CD8-positive, alpha-beta T cell (primary cell): ENCODE measurements at regions of chr7 and their contacts with region 1.

Region 1: GRCh38 chr7:140126435-140127034 is 50.2 kb downstream of the KDM7A start:
- DNase-seq: no peak
- ATAC-seq: no peak
- H3K4me3 ChIP-seq: no peak overlapping the region
- H3K4me3 Mint-ChIP-seq: no peak overlapping the region
- H3K27ac ChIP-seq: no peak overlapping the region
- H3K27ac Mint-ChIP-seq: no peak overlapping the region
- H3K4me1 ChIP-seq: no peaks in the 10 kb centered on the region
- H3K4me1 Mint-ChIP-seq: peaks cover 4% of the 10 kb centered on the region
- H3K27me3 ChIP-seq: no peaks in the 10 kb centered on the region
- H3K27me3 Mint-ChIP-seq: no peaks in the 10 kb centered on the region
- CTCF ChIP-seq: no peak

Region 2: DNA sequence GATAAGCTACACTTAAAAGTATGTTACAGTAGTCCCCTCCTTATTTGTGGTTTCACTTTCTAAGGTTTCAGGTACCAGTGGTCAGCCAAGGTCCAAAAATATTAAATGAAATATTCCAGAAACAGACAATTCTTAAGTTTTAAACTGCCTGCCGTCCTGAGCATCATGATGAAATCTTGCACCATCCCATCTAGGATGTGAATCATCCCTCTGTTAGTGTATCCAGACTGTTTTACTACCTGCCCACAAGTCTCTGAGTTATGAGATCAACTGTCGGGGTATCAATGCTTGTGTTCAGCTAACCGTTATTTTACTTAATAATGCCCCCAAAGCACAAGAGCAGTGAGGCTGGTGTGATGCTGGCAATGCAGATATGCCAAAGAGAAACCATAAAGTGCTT is 38.9 kb after region 1 on chr7:
- CTCF ChIA-PET with region 1: no interaction called
- POLR2A ChIA-PET with region 1: no interaction called
- intact Hi-C with region 1: loop called in 1 of 2 experiments (anchors 5 kb)
- DNase-seq: no peak
- ATAC-seq: no peak
- H3K4me3 ChIP-seq: no peak overlapping the region
- H3K4me3 Mint-ChIP-seq: peak overlapping the region; percentile 3
- H3K27ac ChIP-seq: no peak overlapping the region
- H3K27ac Mint-ChIP-seq: no peak overlapping the region
- H3K4me1 ChIP-seq: peaks cover 43% of the 10 kb centered on the region
- H3K4me1 Mint-ChIP-seq: peaks cover 80% of the 10 kb centered on the region
- H3K27me3 ChIP-seq: no peaks in the 10 kb centered on the region
- H3K27me3 Mint-ChIP-seq: no peaks in the 10 kb centered on the region
- CTCF ChIP-seq: no peak